CD14-positive monocyte (primary cell): ENCODE measurements at regions of chr7 and their contacts with region 1.

Region 1: GRCh38 chr7:90621125-90621746 is 25.1 kb downstream of the CDK14 start:
- DNase-seq: peak; percentile 82 to 96 (median 86)
- H3K4me3 ChIP-seq: peak overlapping the region in 1 of 3 experiments; percentile 24
- H3K4me3 Mint-ChIP-seq: peak overlapping the region in 1 of 2 donors; percentile 63
- H3K27ac ChIP-seq: peak overlapping the region; percentile 40 to 69
- H3K27ac Mint-ChIP-seq: peak overlapping the region; percentile 86 to 96 (median 91)
- H3K4me1 ChIP-seq: peaks cover 31 to 40% of the 10 kb centered on the region in 2 donors
- H3K4me1 Mint-ChIP-seq: peaks cover 46% of the 10 kb centered on the region
- H3K27me3 ChIP-seq: no peaks in the 10 kb centered on the region
- H3K27me3 Mint-ChIP-seq: peaks cover 0 to 1% (median 0%) of the 10 kb centered on the region in 3 donors
- CTCF ChIP-seq: no peak

Region 2: DNA sequence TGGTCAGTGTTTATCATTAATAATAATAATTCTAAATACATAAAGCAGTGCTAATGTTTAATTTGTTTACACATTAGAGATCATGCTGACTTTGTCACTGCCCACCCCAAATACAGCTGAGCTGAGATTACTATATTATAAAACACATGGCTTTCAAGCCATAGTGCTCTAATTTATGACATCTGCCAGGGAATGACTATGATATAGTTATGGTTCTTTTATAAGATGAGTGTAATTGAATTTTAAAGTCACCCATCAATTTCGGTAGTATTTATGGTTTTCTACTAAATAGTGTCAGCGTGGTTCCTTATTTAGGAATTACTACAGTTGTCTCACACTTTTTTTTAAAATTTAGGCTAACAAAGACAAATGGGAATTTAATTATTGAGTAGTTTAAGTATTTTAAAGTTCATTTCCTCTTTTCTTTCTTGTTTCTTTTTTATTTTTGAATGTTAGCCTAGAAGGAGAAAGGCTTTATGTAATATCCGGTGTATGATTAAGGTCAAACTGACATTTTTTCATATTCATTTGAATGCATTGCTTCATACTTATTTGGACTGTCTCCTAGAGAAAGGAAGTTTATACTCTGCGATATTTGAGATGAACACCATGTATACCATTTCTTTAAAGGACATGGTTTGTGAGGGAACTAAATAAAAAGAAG is 21.2 kb before region 1 on chr7:
- intact Hi-C with region 1: loop called in 1 of 2 experiments (anchors 2 kb)
- DNase-seq: peak; percentile 71 to 92 (median 85)
- H3K4me3 ChIP-seq: peak overlapping the region in 1 of 3 experiments; percentile 34
- H3K4me3 Mint-ChIP-seq: peak overlapping the region in 1 of 2 donors; percentile 35
- H3K27ac ChIP-seq: peak overlapping the region in 1 of 2 donors; percentile 76
- H3K27ac Mint-ChIP-seq: peak overlapping the region; percentile 85 to 92 (median 89)
- H3K4me1 ChIP-seq: peaks cover 40 to 57% of the 10 kb centered on the region in 2 donors
- H3K4me1 Mint-ChIP-seq: peaks cover 49% of the 10 kb centered on the region
- H3K27me3 ChIP-seq: peaks cover 0 to 6% of the 10 kb centered on the region in 2 donors
- H3K27me3 Mint-ChIP-seq: peaks cover 3 to 7% (median 5%) of the 10 kb centered on the region in 3 donors
- CTCF ChIP-seq: no peak